GM23248 (cell line): ENCODE measurements at regions of chr12 and their contacts with region 1.

Region 1: DNA sequence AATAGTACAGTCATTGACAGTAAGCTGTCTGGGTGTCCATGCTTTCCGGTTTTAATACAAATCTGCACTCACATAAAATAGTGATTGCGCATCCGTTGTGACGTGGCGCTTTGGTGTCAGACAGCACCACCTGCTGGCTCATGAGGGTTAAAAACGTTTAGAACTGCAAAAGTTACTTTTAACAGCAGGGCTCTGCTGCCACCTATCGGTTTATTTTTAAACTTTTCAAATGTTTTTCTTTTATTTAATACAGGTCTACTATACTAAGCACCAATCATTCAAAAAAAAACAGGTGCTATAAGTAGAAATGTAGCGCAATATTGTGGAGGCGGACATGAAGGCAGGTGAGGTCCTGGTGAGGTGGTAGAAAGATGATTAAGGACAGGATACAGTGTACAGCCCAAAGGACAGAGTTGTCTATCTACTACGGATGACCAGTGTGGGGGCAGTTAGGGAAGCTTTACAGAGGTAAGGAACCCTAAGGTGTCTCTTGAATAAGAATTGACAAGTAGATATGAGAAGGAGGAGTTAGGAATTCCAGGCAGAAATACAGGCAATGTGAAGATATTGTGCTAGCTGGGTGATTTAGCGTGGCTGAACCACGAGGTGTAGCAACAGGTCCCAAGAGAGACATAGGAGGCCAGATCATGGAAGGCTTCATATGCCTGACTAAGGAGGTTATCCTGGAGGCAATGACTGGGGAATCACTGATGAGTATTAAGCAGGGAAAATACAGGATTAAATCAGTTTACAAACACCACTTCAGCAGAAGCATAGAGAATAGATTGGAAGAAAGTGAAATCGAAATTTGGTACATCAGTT is 91.5 kb upstream of the PRB2 start:
- DNase-seq: peak; percentile 94
- H3K4me3 ChIP-seq: 0 out of 2 replicates have a peak overlapping the region, but pooled peaks have one; percentile 24
- H3K27ac ChIP-seq: no peak overlapping the region
- H3K4me1 ChIP-seq: no peaks in the 10 kb centered on the region
- H3K27me3 ChIP-seq: peaks cover 6% of the 10 kb centered on the region

Region 2: DNA sequence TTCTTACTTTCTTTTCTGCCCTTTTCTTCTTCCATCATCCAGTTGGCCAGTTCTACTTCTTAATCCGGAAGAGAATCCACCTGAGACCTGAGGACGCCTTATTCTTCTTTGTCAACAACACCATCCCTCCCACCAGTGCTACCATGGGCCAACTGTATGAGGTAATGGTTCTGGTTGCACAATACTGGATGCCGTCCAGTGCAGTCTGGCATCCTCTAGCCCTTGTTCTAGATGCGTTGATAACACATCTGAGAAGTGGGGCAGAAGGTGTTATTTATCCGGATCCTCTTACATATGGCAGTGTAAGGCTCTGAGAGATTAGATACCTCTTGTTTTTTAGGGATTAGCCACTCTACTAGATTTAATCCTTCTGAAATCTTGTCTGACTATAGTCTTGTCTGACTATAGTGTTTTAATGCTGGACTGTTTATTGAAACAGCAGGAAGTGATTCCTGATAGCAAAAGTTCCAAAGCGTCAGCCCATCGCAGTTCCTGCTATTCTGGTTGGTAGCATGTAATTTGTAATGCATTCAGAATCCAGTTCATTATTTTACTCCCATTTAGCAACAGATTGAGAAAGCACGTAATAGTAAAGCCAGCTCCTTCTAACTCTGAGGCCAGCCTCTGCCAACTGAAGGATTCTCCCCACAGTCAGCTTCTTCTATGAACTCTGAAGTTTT is 1266.3 kb before region 1 on chr12:
- in situ Hi-C with region 1: no loop called
- DNase-seq: peak; percentile 76
- H3K4me3 ChIP-seq: no peak overlapping the region
- H3K27ac ChIP-seq: peak overlapping the region; percentile 21
- H3K4me1 ChIP-seq: peaks cover 29% of the 10 kb centered on the region
- H3K27me3 ChIP-seq: no peaks in the 10 kb centered on the region

Region 3: DNA sequence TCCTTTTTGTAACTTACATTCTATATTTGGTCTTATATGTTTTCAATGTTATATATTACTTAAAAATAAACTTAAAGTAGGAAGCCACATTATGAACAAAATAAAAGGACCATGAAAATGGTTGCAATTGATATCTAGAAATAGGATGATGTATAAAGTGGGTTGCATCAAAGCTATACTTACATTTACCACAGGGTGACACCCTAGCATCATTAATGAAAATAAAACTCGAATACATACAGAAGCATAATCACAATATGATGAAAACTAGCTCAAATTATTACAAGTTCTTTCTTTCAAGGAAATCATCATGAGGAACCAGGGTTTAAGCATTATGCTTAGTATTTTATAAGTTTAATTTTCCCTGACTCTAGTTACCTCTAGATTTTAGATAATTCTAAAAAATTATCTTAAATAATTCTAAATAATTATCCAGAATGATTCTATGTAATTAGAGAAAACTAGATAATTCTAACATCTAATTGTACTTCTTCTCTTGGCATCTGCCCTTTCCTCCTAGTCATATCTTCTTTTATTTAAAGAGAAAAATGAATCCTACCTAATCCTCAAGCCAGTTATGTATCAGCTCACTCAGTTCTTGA is 715.6 kb before region 1 on chr12:
- in situ Hi-C with region 1: loop called (anchors 10 kb)
- DNase-seq: peak; percentile 53
- H3K4me3 ChIP-seq: no peak overlapping the region
- H3K27ac ChIP-seq: no peak overlapping the region
- H3K4me1 ChIP-seq: no peaks in the 10 kb centered on the region
- H3K27me3 ChIP-seq: peaks cover 80% of the 10 kb centered on the region

Region 4: DNA sequence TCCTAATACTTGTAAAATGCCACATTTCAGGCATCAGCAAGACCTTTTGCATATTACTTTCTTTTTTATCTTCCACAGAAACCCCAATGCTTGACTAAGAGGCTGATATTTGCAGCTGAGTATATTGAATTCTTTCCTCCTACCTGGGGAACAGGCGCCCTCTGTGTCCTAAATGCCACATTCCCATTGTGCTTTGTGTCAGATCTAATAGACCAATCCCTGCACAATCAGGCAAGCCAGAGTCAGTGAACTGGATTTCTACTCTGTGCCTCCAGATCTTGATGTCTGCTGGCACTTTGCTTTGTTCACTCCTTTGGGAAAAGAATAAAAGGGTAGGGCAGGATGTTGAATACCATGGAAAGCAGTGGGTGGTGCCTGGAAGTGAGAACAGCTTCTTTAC is 277.7 kb before region 1 on chr12:
- in situ Hi-C with region 1: loop called (anchors 10 kb)
- DNase-seq: no peak
- H3K4me3 ChIP-seq: no peak overlapping the region
- H3K27ac ChIP-seq: no peak overlapping the region
- H3K4me1 ChIP-seq: no peaks in the 10 kb centered on the region
- H3K27me3 ChIP-seq: no peaks in the 10 kb centered on the region